MCF 10A (cell line): ENCODE measurements at regions of chr12 and their contacts with region 1.

Region 1: GRCh38 chr12:53220801-53221202 is 11.2 kb downstream of the RARG start:
- DNase-seq: peak; percentile 93
- H3K4me3 Mint-ChIP-seq: peak overlapping the region; percentile 83
- H3K27ac Mint-ChIP-seq: peak overlapping the region; percentile 80
- H3K4me1 Mint-ChIP-seq: peaks cover 69% of the 10 kb centered on the region
- H3K27me3 Mint-ChIP-seq: no peaks in the 10 kb centered on the region
- CTCF ChIP-seq: no peak

Region 2: DNA sequence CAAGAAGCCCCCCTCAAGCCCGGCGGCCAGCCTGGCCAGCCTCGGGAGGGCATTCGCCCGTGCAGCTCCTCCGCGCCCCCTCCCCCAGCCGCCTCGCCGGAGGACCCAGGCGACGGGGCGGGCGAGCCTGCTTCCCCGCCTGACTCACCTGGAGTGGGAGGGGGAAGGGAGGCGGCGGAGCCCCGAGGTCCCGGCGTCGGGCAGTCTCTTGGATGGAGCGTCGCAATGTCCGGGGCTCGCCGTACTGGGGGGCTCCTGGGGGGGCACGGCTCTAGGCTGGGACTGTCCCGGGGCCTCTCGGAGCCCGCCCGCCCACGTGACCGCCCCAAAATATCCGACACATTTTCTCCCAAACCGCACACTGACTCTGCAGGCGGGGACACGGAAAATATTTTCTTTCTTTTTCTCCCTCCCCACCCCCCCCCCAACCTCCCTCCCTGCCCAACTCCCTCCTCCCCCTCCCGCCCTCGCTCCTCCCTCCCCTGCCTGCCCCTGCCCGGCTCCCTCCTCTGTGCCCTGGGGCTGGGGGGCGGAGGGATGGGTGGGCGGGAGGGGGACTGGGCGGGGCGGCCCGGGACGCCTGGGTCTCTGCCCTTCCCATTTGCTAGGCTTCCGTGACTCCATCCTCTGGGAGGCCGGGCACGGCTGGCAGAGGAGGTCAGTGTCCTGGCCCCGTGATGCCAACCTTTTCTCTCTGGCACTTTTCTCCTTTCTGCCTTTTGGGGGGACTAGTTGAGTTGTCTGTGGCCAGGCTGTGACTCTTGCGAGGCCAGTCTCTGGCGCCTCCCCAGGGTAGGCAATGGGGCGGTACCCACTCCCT is 11.2 kb after region 1 on chr12 and contains the start of gene RARG:
- CTCF ChIA-PET with region 1: interaction called, 5 read pairs
- POLR2A ChIA-PET with region 1: interaction called, 18 read pairs
- intact Hi-C with region 1: no loop called
- DNase-seq: peak; percentile 77
- H3K4me3 Mint-ChIP-seq: peak within 1 kb of the TSS; percentile 77
- H3K27ac Mint-ChIP-seq: peak within 1 kb of the TSS; percentile 67
- H3K4me1 Mint-ChIP-seq: peaks cover 70% of the 10 kb centered on the region
- H3K27me3 Mint-ChIP-seq: no peaks in the 10 kb centered on the region
- CTCF ChIP-seq: no peak
- total RNA-seq, gene RARG: 30.9 and 43.7 TPM in 2 replicates

Region 3: DNA sequence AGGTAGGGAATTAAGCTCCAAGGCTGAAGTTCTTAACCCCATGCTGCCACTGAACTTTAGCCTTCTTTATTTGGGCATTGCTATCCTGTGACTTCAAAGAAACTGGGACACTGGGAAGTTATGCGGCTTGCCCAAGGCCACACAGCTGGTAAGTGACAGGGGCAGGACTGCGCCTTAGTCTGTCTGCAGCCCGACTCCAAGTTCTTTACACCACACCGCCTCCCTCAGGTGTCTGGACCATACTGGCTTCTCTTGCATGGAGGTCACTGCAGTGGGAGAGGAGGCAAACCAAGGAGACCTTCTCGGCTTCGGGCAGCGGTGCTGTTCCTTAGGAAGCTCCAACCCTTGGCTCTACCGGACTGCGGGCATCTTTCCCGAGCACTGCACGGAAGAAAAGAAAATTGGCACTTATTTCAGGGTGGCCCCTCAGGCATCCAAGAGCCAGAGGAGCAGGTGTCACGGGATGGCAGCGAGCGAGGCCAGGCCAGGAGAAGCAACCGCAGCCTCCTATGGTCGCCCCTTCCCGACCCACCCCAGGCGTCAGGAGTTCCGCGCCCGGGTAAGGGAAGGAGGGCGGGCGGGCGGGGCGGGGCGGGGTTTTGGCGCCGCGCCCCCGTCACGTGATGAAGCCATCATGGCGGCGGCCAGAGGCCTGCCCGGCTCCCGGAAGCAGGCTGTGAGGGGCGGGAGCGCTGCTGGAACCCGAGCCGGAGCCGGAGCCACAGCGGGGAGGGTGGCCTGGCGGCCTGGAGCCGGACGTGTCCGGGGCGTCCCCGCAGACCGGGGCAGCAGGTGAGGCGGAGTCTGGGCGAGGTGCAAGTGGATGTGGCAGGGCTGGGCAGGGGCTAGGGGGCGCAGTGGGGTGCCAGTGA is 30.9 kb after region 1 on chr12:
- CTCF ChIA-PET with region 1: interaction called, 10 read pairs
- POLR2A ChIA-PET with region 1: interaction called, 43 read pairs
- intact Hi-C with region 1: loop called (anchors 2 kb)
- DNase-seq: peak; percentile 77
- H3K4me3 Mint-ChIP-seq: peak overlapping the region; percentile 87
- H3K27ac Mint-ChIP-seq: peak overlapping the region; percentile 83
- H3K4me1 Mint-ChIP-seq: peaks cover 25% of the 10 kb centered on the region
- H3K27me3 Mint-ChIP-seq: no peaks in the 10 kb centered on the region
- CTCF ChIP-seq: peak; percentile 48